ENCODE measurements at regions of chr11 and their contacts with region 1.

Region 1: DNA sequence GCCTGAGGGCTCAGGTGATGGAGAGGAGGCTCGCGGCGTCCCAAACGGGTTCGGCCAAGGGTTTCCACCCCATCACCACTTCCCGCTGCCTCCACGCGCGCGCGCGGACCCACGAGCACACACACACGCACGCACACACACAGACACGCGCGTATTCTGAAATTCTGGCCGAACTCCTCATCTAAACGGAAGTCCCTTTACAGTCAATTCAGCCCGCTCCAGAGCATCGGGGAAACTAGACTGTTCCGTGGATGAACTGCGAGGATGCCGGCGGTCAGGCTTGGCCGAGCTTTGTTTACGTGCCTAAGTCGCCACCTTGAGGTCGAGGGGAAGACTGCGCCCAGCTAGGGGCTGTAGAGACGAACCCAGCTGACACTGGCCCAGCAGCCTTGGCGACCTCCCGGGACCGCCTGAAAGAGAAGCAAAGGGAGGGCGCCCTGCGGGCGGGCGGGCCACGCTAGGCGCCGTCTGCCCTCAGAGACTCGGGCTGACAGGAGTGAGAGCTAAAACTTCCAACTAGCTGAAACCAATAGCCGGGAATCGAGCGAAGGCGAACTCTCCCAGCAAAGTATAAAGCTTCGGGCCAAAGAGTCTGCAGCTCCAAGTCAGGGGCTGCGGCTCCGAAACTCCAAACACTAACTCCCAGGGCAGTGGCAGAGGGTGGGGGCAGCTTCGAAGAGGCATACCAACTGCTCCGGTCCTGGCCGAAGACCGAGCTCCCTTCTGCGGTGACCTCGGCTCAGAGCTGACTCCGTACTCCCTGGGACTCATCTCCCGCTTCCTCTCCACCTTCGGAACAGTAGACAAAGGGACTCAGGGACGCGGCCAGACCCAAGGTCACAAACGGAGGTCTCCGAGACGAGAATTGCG is 124.7 kb upstream of the C11orf58 start:
- DNase-seq: peak; percentile 91
- ATAC-seq: peak; percentile 96 to 97

Region 2: DNA sequence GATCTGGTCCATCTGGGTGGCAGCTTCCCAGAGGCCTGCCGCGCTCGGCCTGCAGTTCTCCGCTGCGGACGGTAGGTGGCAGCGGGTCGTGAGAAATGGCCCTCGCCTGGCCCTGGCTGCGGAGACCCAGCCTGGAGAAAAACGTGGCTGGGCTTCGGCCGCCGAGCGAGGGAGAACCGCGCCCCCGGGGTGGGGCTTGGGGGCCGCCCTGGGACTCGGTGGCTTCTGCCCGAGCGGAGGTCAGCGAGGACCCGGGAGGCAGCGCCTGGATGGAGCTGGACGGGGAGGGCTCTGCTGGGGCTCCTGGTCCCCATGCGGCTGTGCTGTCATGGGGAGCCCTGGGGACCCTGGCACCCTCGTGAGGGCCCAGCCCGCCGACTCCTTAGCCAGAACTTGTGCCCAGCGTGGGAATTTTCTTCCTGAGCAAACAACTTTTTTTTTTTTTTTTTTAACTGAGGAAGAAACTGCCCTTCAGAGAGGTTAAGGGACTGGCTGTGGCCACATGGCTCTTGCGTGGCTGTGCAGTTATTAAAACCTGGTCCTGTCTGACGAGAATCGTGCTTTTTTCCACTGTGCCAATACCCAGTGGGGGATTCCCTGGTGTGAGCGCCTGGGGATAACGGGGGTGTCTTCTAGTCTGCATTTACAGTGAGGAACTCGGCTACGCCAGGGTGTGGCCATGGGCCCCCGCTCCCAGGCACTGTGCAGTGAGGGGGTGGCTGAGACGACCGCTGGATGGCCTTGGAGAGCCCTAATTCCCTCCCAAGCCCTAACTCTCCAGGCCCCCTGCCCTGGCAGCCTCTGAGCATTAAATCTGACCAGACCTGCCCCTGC is 963.4 kb before region 1 on chr11:
- intact Hi-C with region 1: loop called in 1 of 2 experiments (anchors 5 kb)
- DNase-seq: peak; percentile 96
- ATAC-seq: peak; percentile 99

Region 3: DNA sequence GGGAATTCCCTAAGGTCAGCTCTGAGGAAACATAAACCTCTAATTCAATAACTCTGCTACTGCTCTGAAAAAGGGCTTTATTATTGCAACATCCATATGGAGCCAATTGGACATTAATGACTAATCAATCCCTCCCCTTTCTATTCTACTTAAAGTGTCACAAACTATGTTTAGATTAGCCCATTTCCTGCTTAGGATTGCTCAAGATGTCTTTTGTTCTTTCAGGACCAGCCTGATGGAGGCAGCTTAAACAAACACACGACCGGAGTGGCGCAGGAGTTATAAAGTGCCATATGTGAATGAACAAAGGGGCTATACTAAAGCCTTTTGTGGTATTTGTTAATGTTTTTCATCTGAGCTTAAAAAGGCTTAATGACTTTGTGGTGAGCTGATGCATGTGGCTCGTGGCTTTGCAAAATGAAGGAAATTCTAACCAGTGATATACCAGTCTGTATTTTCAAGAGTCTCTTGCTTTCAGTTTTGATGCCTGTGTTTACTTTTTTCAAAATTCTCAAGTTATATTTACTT is 611.8 kb before region 1 on chr11:
- intact Hi-C with region 1: loop called in 1 of 2 experiments (anchors 10 kb)
- DNase-seq: peak; percentile 20
- ATAC-seq: peak in 1 of 2 donors; percentile 26

Region 4: DNA sequence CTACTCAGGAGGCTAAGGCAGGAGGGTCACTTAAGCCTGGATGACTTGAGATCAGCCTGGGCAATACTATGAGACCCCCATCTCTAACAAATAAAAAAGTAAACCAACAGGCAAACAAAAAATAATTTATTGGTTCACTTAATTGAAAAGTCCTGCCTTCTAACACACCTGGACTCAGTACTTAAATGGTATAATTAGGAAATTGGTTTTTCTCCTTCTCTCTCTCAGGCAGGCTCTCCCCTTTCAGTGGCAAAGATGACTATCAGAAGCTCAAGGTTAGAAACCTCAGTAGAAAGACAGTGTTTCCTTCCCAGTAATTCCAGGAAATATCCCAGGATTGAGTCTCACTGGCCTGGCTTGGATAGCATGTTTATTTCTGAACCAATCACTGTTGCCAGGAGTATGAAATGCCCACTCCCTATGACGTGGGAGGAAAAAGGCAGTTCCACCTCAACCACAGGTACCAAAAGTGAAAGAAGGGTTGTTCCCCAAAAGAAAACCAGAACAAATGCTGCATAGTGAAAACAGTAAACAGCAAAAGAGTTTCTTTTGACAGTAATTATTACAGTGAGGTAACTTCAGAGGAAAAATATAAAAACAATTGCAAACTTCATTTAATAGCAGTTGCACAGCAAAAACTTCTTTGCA is 201.1 kb before region 1 on chr11:
- intact Hi-C with region 1: no loop called
- DNase-seq: no peak
- ATAC-seq: no peak